Thyroid gland (tissue), 4 donors: ENCODE measurements at regions of chr1 and their contacts with region 1.

Region 1: GRCh38 chr1:116574581-116575291 is 3.9 kb upstream of the CD58 start:
- DNase-seq: peak; percentile 64 to 70
- H3K4me3 ChIP-seq: no peak overlapping the region
- H3K27ac ChIP-seq: no peak overlapping the region
- H3K4me1 ChIP-seq: peaks cover 6 to 9% of the 10 kb centered on the region in 2 donors
- H3K27me3 ChIP-seq: no peaks in the 10 kb centered on the region
- CTCF ChIP-seq: peak in 5 of 6 experiments; percentile 70 to 87 (median 83)
- POLR2A ChIP-seq: no peak

Region 2: GRCh38 chr1:116674011-116674531 is 99.3 kb after region 1 on chr1:
- intact Hi-C with region 1: loop called (anchors 5 kb)
- DNase-seq: no peak
- H3K4me3 ChIP-seq: no peak overlapping the region
- H3K27ac ChIP-seq: no peak overlapping the region
- H3K4me1 ChIP-seq: peaks cover 0 to 4% of the 10 kb centered on the region in 2 donors
- H3K27me3 ChIP-seq: no peaks in the 10 kb centered on the region
- CTCF ChIP-seq: no peak
- POLR2A ChIP-seq: no peak